Dorsolateral prefrontal cortex (tissue), 120 donors: ENCODE measurements at regions of chr1 and their contacts with region 1.

Region 1: DNA sequence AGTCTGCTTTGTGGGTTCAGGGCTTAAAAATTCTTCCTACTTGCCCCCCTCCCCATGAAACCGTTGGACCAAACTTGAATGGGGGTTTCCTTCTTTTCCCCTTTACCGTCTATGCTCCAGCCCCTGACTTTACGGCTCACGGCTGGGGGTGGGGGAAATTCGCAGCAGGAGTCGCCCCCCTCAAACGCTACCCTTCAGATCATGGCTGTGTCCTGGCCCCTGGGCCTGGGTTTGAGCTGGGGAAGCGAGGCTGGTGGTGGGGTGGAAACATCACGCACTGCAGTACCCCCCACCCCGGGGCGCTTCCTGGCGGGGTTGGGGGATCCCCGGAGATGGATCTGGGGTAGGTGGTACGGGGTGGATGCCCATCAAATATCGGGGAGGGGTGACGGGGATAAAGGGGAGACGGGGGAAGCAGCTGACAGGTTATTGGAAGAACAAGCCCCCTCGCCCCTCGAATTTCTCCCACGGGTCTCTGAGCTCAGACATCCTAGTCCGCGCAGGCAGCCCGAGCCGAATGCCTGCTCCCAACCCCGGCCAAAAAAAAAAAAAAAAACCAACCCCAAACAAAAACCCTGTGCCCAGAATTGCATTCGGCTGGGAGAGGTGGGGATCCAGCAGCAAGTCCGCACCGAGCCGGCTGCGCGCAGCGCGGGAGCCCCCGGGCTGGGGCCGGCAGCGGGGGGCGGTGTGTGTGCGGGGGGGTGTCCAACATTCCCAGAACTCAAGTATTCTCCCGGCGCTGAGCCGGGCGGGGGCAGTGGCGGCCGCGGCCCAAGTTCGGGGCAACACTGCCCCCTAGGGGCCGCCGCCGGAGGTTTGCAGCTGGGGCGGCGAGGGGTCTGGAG is 59.0 kb upstream of the ACOT11 start:
- DNase-seq: peak; percentile 59 to 85 (median 76)
- H3K4me3 ChIP-seq: peak overlapping the region; percentile 39 to 80 (median 65)
- H3K27ac ChIP-seq: peak overlapping the region in 58 of 59 donors; percentile 54 to 98 (median 90)
- H3K27me3 ChIP-seq: no peaks in the 10 kb centered on the region
- CTCF ChIP-seq: peak; percentile 86 to 100 (median 98)

Region 2: DNA sequence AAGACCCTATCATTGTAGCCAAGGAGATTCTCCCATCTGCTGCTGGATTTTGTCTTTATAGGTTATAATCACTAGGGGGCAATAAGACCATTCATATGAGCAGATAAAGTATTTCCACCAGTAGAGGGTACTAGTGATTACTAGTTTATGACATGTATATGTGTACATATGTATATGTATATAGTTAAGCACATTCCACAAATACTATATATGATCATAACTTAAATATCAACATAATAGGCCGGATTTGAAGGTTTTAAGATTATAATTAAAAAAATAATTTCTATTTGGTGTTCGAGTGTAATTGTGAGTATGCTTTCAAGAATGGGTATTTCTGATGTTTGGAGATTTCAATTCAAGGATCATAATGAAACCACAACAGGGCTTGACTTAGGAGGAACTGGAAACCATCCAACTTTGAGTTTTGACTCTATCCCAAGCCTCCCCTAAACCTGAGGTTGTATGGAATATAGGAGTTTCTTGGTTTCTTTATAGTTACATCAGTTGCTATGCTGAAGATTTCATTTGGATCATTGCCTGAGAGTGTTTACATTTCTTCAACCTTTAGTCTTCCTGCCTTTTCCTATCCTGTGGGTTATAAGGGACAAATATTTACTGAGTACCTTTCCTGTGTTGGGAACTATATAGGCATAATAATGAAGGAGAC is 418.7 kb before region 1 on chr1:
- intact Hi-C with region 1: loop called (anchors 1 to 5 kb)
- DNase-seq: no peak
- H3K4me3 ChIP-seq: no peak overlapping the region
- H3K27ac ChIP-seq: no peak overlapping the region
- H3K27me3 ChIP-seq: no peaks in the 10 kb centered on the region
- CTCF ChIP-seq: peak; percentile 53 to 96 (median 86)

Region 3: GRCh38 chr1:54199765-54200518 is 289.1 kb before region 1 on chr1 and contains the starts of genes CYB5RL and MRPL37:
- intact Hi-C with region 1: loop called (anchors 5 to 10 kb)
- DNase-seq: peak; percentile 87 to 95 (median 94)
- H3K4me3 ChIP-seq: peak within 1 kb of the TSS; percentile 67 to 99 (median 90)
- H3K27ac ChIP-seq: peak within 1 kb of the TSS in 56 of 59 donors; percentile 13 to 95 (median 73)
- H3K27me3 ChIP-seq: no peaks in the 10 kb centered on the region
- CTCF ChIP-seq: peak in 23 of 56 donors; percentile 4 to 40 (median 17)
- total RNA-seq, gene CYB5RL: 3.6 to 19.4 (median 8.7) TPM
- total RNA-seq, gene MRPL37: 33.5 to 66.9 (median 49.5) TPM

Region 4: DNA sequence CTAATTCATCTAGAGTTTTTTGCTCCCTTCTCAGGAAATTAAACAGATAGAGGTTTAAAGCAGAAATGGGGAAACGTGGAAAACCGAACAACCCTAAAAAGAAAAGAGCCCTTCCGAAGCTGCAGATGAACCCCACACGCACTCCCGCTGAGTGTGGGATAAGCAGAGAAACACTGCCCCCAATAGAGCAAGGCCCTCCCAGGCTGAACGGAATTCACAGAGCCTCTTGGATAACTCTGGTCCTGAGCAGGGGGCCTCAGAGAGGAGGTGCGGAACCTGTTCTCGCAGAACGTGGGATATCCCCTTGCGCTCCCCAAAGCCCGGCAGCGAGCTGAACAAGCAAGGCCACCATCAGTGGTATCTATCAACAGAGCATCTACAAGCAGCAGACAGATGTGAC is 127.7 kb before region 1 on chr1:
- intact Hi-C with region 1: loop called in 1 of 2 experiments (anchors 5 kb)
- DNase-seq: peak in 6 of 10 donors; percentile 58 to 73 (median 64)
- H3K4me3 ChIP-seq: no peak overlapping the region
- H3K27ac ChIP-seq: peak overlapping the region in 28 of 59 donors; percentile 3 to 92 (median 46)
- H3K27me3 ChIP-seq: no peaks in the 10 kb centered on the region
- CTCF ChIP-seq: peak in 53 of 56 donors; percentile 26 to 80 (median 52)

Region 5: GRCh38 chr1:54439550-54440223 is 49.3 kb before region 1 on chr1:
- intact Hi-C with region 1: no loop called
- DNase-seq: no peak
- H3K4me3 ChIP-seq: no peak overlapping the region
- H3K27ac ChIP-seq: no peak overlapping the region
- H3K27me3 ChIP-seq: no peaks in the 10 kb centered on the region
- CTCF ChIP-seq: no peak